ENCODE measurements at regions of chr3 and their contacts with region 1.

Region 1: DNA sequence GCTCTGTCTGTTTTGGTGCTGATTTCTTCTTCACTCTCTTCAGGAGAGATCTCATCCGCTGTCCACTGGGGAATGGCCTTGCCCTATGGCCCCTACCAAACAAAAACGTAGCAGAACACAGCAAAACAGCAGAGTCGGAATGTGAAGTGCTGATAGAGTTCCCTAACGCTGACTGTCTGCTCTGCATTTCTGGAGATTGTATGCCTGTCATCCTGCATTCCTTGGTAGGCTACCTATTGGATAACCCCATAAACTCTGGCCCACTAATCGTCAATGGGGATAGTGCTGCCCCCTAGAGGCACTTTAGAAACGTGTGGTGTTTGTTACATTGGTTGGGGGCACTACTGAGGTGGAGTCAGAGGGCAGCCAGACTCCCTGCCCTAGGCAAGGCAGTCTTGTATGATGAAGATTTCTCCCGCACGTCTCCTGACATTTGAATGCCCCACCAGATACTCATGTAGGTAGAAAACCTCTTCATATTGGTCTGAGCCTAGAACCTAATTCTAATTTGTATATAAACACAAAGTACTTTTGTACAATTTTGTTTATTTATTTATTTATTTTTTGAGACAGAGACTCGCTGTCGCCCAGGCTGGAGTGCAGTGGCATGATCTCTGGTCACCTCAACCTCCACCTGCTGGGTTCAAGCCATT is 15.6 kb upstream of the MAGEF1 start:
- DNase-seq: peak; percentile 70
- H3K4me3 Mint-ChIP-seq: no peak overlapping the region
- H3K27ac Mint-ChIP-seq: no peak overlapping the region
- H3K4me1 Mint-ChIP-seq: no peaks in the 10 kb centered on the region
- H3K27me3 Mint-ChIP-seq: peaks cover 48% of the 10 kb centered on the region
- CTCF ChIP-seq: peak; percentile 89

Region 2: GRCh38 chr3:184777336-184778004 is 50.0 kb after region 1 on chr3:
- CTCF ChIA-PET with region 1: interaction called, 6 read pairs
- intact Hi-C with region 1: loop called (anchors 5 kb)
- DNase-seq: peak; percentile 94
- H3K4me3 Mint-ChIP-seq: no peak overlapping the region
- H3K27ac Mint-ChIP-seq: no peak overlapping the region
- H3K4me1 Mint-ChIP-seq: peaks cover 21% of the 10 kb centered on the region
- H3K27me3 Mint-ChIP-seq: peaks cover 82% of the 10 kb centered on the region
- CTCF ChIP-seq: peak; percentile 96

Region 3: DNA sequence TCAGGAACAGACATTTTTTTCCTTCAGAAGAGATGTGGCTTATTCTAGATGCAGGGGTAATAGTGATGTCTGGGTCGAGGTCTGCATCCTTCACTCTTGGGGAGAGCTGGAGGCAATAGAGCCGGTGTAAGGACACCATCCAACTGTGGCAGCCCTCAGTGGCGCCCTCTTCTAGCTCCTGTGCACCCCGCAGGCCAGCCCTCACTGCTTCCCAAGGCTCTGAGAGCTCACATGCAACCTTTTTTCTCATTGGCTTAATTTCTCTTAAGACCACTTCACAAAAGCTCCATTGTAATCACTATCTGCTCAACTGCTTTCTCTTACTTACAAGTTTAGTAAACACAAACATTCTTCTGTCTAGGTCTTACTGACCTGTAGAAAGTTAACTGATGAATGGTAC is 80.5 kb after region 1 on chr3:
- CTCF ChIA-PET with region 1: no interaction called
- intact Hi-C with region 1: loop called (anchors 1 kb)
- DNase-seq: peak; percentile 49
- H3K4me3 Mint-ChIP-seq: no peak overlapping the region
- H3K27ac Mint-ChIP-seq: no peak overlapping the region
- H3K4me1 Mint-ChIP-seq: peaks cover 21% of the 10 kb centered on the region
- H3K27me3 Mint-ChIP-seq: no peaks in the 10 kb centered on the region
- CTCF ChIP-seq: no peak

Region 4: GRCh38 chr3:184884359-184885017 is 157.0 kb after region 1 on chr3:
- CTCF ChIA-PET with region 1: no interaction called
- intact Hi-C with region 1: no loop called
- DNase-seq: no peak
- H3K4me3 Mint-ChIP-seq: no peak overlapping the region
- H3K27ac Mint-ChIP-seq: no peak overlapping the region
- H3K4me1 Mint-ChIP-seq: no peaks in the 10 kb centered on the region
- H3K27me3 Mint-ChIP-seq: no peaks in the 10 kb centered on the region
- CTCF ChIP-seq: no peak